ENCODE measurements at regions of chr7 and their contacts with region 1.

Region 1: GRCh38 chr7:131107337-131108211 is 220.1 kb upstream of the MKLN1 start:
- DNase-seq: peak; percentile 84 to 91 (median 88)
- H3K4me3 ChIP-seq: peak overlapping the region; percentile 26 to 98
- H3K4me3 Mint-ChIP-seq: peak overlapping the region; percentile 84 to 99 (median 98)
- H3K27ac ChIP-seq: peak overlapping the region; percentile 99
- H3K27ac Mint-ChIP-seq: peak overlapping the region; percentile 95 to 100 (median 99)
- H3K4me1 ChIP-seq: peaks cover 61% of the 10 kb centered on the region
- H3K4me1 Mint-ChIP-seq: peaks cover 47 to 84% (median 57%) of the 10 kb centered on the region in 4 donors
- H3K27me3 ChIP-seq: no peaks in the 10 kb centered on the region
- H3K27me3 Mint-ChIP-seq: peaks cover 0 to 1% of the 10 kb centered on the region in 2 donors

Region 2: DNA sequence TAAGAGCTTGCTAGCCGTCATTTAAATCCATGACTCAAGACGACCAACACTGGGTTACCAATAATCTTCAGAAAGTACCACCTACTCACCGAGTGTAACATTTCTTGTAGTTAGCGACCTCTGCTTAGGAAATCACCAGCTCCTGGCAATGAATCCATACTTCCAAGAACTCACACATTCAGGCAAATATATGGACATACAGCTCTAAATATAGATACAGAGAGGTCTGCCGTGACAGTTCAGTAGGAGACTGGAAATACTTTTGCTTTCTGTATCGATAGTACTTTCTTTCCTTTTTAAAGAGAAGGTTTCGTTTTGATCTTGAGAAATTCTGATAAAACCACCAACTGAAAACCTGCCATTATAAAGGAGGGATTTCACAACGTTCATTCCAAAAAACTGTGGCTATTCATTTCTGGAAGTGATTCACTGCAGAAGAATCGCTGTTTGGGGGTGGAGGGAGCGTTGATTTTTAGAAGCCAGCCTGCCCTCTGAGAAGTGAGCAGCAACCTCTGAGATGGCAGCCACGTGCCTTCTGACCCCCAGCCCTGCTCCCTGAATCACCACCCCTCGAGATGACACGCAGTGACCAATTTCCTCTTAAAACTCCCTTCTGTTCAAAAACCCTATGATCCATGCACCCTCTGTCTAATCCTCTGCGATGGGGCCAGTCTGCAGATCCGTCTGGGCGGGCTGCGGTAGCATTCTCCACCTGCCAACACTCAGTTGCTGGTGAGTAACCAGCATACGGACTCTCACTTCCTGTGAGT is 194.5 kb before region 1 on chr7:
- CTCF ChIA-PET with region 1: interaction called, 3 read pairs
- POLR2A ChIA-PET with region 1: interaction called, 5 read pairs
- intact Hi-C with region 1: loop called (anchors 2 kb)
- DNase-seq: peak; percentile 80 to 98 (median 85)
- H3K4me3 ChIP-seq: peak overlapping the region; percentile 77 to 86
- H3K4me3 Mint-ChIP-seq: peak overlapping the region; percentile 82 to 98 (median 92)
- H3K27ac ChIP-seq: peak overlapping the region; percentile 96
- H3K27ac Mint-ChIP-seq: peak overlapping the region in 6 of 7 donors; percentile 93 to 99 (median 98)
- H3K4me1 ChIP-seq: peaks cover 86% of the 10 kb centered on the region
- H3K4me1 Mint-ChIP-seq: peaks cover 78 to 97% (median 89%) of the 10 kb centered on the region in 4 donors
- H3K27me3 ChIP-seq: no peaks in the 10 kb centered on the region
- H3K27me3 Mint-ChIP-seq: no peaks in the 10 kb centered on the region

Region 3: DNA sequence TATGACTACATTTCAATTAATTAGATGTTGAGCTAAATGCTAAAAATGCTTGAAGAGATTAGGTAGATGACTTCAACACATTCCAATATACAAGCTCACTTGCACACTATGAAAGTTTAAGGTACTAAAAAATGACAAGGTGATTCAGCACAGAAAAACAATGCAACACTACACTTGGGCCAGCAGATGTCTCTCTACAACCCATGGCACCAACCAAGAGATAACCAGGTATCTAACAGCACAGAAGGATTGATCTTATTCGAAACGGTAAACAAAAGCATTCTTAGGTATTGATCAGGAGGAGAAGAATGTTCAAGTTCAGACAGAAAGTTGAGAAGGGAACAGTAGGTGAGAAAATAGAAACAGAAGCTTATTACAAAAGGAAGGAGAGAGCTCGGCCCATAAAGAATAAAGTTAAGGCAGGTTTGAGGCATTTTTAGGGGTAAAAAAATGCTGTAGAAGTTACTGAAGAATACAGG is 125.4 kb before region 1 on chr7:
- CTCF ChIA-PET with region 1: interaction called, 3 read pairs
- POLR2A ChIA-PET with region 1: interaction called, 5 read pairs
- intact Hi-C with region 1: loop called (anchors 5 kb)
- DNase-seq: peak; percentile 62 to 70 (median 64)
- H3K4me3 ChIP-seq: no peak overlapping the region
- H3K4me3 Mint-ChIP-seq: no peak overlapping the region
- H3K27ac ChIP-seq: peak overlapping the region; percentile 50
- H3K27ac Mint-ChIP-seq: no peak overlapping the region
- H3K4me1 ChIP-seq: peaks cover 77% of the 10 kb centered on the region
- H3K4me1 Mint-ChIP-seq: peaks cover 24 to 48% (median 38%) of the 10 kb centered on the region in 4 donors
- H3K27me3 ChIP-seq: no peaks in the 10 kb centered on the region
- H3K27me3 Mint-ChIP-seq: no peaks in the 10 kb centered on the region

Region 4: GRCh38 chr7:131071786-131072504 is 35.6 kb before region 1 on chr7:
- CTCF ChIA-PET with region 1: interaction called, 4 read pairs
- POLR2A ChIA-PET with region 1: interaction called, 9 read pairs
- intact Hi-C with region 1: loop called (anchors 5 kb)
- DNase-seq: no peak
- H3K4me3 ChIP-seq: no peak overlapping the region
- H3K4me3 Mint-ChIP-seq: peak overlapping the region in 6 of 8 donors; percentile 8 to 44 (median 34)
- H3K27ac ChIP-seq: no peak overlapping the region
- H3K27ac Mint-ChIP-seq: peak overlapping the region in 3 of 7 donors; percentile 44 to 89 (median 49)
- H3K4me1 ChIP-seq: peaks cover 90% of the 10 kb centered on the region
- H3K4me1 Mint-ChIP-seq: peaks cover 66 to 95% (median 83%) of the 10 kb centered on the region in 4 donors
- H3K27me3 ChIP-seq: no peaks in the 10 kb centered on the region
- H3K27me3 Mint-ChIP-seq: no peaks in the 10 kb centered on the region

Region 5: DNA sequence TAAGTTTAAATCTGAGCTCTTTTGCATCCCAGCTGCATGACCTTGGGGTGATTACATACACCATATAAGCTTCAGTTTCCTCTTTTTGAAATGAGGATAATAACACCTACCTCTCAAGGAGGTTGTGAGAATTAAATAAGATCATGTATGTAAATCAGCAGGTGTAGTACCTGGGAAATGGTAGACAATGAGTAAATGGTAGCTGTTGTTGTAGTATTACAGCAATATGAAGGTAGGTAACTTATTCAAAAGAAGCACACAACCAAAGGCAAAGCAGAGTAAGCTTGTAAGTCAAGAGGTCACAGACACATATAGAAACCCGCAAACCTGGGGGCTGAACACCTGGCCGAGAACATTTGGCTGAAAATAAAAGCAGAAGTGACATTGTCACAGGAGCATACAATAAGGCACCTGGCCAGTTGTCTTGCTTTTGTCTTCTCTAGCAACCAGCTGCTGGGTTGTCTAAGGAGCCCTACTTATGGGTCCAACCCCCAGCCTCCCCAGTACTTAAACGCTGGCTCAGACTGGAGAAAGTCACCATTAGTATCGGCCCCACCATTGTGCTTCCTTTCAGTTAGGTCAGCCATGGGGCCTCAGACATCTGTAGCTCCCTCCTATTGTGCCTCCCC is 16.5 kb after region 1 on chr7:
- CTCF ChIA-PET with region 1: interaction called, 6 read pairs
- POLR2A ChIA-PET with region 1: interaction called, 12 read pairs
- intact Hi-C with region 1: no loop called
- DNase-seq: no peak
- H3K4me3 ChIP-seq: no peak overlapping the region
- H3K4me3 Mint-ChIP-seq: no peak overlapping the region
- H3K27ac ChIP-seq: no peak overlapping the region
- H3K27ac Mint-ChIP-seq: no peak overlapping the region
- H3K4me1 ChIP-seq: no peaks in the 10 kb centered on the region
- H3K4me1 Mint-ChIP-seq: peaks cover 0 to 4% (median under 1%) of the 10 kb centered on the region in 4 donors
- H3K27me3 ChIP-seq: no peaks in the 10 kb centered on the region
- H3K27me3 Mint-ChIP-seq: peaks cover 0 to 1% of the 10 kb centered on the region in 2 donors

Region 6: GRCh38 chr7:131188367-131189339 is 81.1 kb after region 1 on chr7:
- CTCF ChIA-PET with region 1: interaction called, 15 read pairs
- POLR2A ChIA-PET with region 1: interaction called, 176 read pairs
- intact Hi-C with region 1: loop called (anchors 1 kb)
- DNase-seq: peak; percentile 83 to 88 (median 84)
- H3K4me3 ChIP-seq: no peak overlapping the region
- H3K4me3 Mint-ChIP-seq: peak overlapping the region; percentile 21 to 79 (median 69)
- H3K27ac ChIP-seq: peak overlapping the region; percentile 54
- H3K27ac Mint-ChIP-seq: peak overlapping the region; percentile 89 to 98 (median 95)
- H3K4me1 ChIP-seq: peaks cover 40% of the 10 kb centered on the region
- H3K4me1 Mint-ChIP-seq: peaks cover 26 to 43% (median 30%) of the 10 kb centered on the region in 4 donors
- H3K27me3 ChIP-seq: no peaks in the 10 kb centered on the region
- H3K27me3 Mint-ChIP-seq: peaks cover 0 to 2% of the 10 kb centered on the region in 2 donors

Region 7: DNA sequence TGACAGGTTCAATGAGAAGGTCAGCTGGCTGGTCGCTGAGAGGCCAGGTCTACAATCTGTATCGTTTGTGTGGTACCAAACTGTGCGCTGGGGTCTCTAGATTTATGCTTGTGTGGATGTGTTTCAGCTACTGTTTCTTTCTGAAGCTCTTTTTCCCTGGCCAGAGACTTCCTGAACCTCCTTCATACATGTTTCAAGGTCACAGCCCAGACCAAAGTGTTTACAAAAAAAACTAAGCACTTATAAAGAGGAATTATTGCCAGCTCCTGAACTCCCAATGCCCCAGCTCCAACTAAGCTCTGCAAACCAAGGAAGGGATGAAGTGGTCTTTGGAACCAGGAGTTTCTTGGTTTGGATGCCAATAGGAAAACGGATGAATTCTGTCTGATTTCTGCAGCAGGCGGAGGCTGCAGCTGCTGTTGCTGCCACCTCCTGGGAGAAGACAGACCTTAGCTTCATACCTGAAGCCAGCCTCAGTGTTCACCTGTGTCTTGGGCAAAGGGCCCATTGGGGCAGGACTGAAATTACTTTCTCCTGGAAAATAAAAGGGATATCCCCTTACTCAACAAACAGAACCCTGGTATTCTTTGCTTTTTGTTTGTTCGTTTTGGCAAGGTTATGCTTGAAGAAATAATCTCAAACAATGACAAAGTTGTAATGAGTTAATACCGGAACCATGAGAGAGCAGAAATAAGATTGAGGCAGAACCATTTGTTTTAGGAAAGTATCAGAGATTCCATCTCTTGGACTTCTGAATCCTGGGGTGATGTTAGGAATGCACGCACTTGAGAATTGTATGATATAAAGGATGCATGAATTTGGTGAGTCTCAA is 195.5 kb after region 1 on chr7:
- CTCF ChIA-PET with region 1: interaction called, 6 read pairs
- POLR2A ChIA-PET with region 1: interaction called, 27 read pairs
- intact Hi-C with region 1: loop called (anchors 1 kb)
- DNase-seq: peak in 4 of 5 donors; percentile 24 to 28 (median 25)
- H3K4me3 ChIP-seq: no peak overlapping the region
- H3K4me3 Mint-ChIP-seq: no peak overlapping the region
- H3K27ac ChIP-seq: no peak overlapping the region
- H3K27ac Mint-ChIP-seq: peak overlapping the region in 1 of 7 donors; percentile 25
- H3K4me1 ChIP-seq: no peaks in the 10 kb centered on the region
- H3K4me1 Mint-ChIP-seq: peaks cover 0 to 2% (median 0%) of the 10 kb centered on the region in 4 donors
- H3K27me3 ChIP-seq: no peaks in the 10 kb centered on the region
- H3K27me3 Mint-ChIP-seq: no peaks in the 10 kb centered on the region